ENCODE measurements at regions of chr10 and their contacts with region 1.

Region 1: DNA sequence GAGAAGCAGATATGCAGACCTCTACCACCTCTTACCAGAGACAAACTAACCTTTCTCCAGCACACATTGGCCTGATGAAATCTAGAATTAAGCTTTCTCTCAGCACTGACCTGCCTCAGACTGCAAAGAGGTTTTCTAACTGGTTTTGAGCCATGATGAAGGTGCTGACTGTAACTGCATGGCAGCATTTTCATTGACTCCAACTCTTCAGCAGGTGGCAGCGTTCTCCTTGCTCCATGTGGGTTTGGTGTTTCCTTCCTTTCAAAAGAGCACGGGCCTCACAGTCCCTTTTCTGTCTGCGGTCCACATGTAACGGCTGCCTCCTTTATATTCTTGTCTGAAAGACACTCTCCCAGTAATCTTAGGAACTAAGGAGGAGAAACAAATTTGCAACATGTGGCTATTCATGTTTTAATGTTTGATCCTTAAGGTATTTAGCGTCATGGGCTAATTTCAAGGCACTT is 12.6 kb downstream of the KLLN start:
- DNase-seq: peak; percentile 81
- H3K4me3 ChIP-seq: no peak overlapping the region
- H3K27ac ChIP-seq: no peak overlapping the region
- H3K4me1 ChIP-seq: no peaks in the 10 kb centered on the region
- H3K27me3 ChIP-seq: no peaks in the 10 kb centered on the region
- CTCF ChIP-seq: peak in 3 of 4 experiments; percentile 60 to 75 (median 63)
- EP300 ChIP-seq: no peak
- POLR2A ChIP-seq: no peak

Region 2: GRCh38 chr10:87819274-87819585 is 31.5 kb before region 1 on chr10:
- intact Hi-C with region 1: no loop called
- DNase-seq: no peak
- H3K4me3 ChIP-seq: no peak overlapping the region
- H3K27ac ChIP-seq: no peak overlapping the region
- H3K4me1 ChIP-seq: peaks cover 0 to 39% (median 22%) of the 10 kb centered on the region in 4 donors
- H3K27me3 ChIP-seq: no peaks in the 10 kb centered on the region
- CTCF ChIP-seq: no peak
- EP300 ChIP-seq: no peak
- POLR2A ChIP-seq: no peak

Region 3: DNA sequence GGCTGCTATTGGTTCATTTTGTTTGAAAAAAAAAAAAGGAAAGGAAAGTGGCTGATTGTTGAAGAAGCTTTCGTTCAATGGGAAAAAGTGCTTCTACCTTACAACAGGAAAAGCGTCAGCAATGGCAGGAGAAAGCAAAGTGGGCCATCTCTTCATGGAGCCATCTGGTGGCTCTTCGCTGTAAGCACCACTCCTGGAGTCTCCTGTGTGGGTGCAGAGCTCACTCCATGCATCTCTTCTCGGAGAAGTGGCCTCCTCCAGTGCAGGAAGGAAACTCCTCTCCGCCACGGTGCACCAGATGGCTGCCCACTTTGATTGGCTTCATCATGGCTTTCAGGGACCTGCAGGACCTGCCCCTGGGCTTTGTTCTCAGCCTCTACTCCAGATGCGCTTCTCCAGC is 263.6 kb after region 1 on chr10:
- intact Hi-C with region 1: loop called (anchors 5 kb)
- DNase-seq: no peak
- H3K4me3 ChIP-seq: no peak overlapping the region
- H3K27ac ChIP-seq: no peak overlapping the region
- H3K4me1 ChIP-seq: no peaks in the 10 kb centered on the region
- H3K27me3 ChIP-seq: no peaks in the 10 kb centered on the region
- CTCF ChIP-seq: peak in 3 of 4 experiments; percentile 20 to 30 (median 26)
- EP300 ChIP-seq: no peak
- POLR2A ChIP-seq: no peak

Region 4: DNA sequence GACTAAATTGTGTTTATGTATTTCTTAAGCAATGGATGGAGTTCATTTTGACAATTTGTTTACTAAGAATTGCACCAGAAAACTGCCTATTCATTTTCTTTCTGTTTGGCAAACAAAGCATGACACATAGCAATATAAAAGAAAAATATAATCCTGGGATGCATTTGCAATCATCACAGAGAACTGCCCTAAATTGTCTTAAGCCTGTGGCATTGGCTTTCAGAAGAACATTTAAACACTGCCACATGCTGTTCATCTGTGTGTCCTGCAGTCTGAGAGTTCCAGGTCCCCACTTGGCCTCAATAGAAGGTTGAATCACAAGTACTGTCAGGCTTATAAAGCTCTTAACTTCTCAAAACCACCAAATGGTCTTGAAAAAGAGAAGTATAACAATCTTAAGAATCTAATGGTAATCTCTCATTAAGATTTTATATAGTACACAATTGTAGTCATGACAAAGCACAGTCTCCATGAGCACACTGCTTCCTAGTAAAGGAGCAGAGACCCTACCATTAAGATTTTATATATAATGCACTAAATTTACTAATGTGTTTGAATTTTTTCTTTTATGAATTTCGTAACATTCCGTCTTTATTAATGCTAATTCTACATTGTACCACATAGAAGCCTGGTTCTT is 702.5 kb after region 1 on chr10:
- intact Hi-C with region 1: loop called (anchors 2 kb)
- DNase-seq: peak; percentile 73
- H3K4me3 ChIP-seq: no peak overlapping the region
- H3K27ac ChIP-seq: no peak overlapping the region
- H3K4me1 ChIP-seq: no peaks in the 10 kb centered on the region
- H3K27me3 ChIP-seq: no peaks in the 10 kb centered on the region
- CTCF ChIP-seq: peak; percentile 48 to 66 (median 60)
- EP300 ChIP-seq: no peak
- POLR2A ChIP-seq: no peak

Measured in sigmoid colon (tissue), 7 donors.